Gastrocnemius medialis (tissue), 4 donors: ENCODE measurements at regions of chr6 and their contacts with region 1.

Region 1: DNA sequence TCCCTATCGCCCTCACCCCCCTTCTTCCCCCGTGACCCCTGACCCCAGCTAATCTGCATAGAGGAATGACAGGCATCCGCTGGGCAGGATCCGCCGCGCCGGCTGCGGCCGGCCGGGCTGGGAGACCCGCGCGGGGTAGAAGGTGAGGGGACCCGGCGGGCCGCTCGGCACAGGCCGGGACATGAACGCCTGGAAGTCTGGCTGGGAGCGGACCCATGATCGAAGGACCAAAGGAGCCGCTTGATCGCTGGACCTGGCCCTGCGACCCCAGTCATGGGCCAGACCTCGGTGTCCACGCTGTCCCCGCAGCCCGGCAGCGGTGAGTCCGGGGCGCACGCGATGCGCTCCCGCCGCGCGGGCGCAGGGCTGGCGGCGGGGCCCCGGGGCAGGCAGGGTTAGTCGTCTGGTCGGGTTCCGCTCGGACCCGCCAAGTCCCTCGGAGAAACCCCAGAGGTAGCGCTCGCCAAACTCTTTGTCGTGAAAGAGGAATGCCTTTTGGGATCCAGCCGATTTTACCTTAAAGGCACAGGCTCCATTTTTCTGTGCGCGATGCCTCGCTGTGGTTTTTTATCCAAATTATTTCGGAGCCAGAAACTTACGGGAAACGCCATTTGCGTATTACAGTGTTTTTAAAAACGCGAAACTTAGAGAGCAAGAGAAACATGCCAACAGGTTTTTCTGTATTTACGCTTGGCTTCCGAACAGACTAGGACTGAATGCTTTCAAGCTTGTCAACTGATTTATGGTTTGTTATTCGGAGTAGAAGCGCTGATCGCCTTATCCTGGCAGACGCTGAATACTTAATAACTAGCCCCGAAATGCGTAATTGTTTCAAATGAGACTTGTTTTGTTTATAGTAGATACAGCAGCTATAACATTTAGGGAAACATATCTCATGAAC is at the start of gene PHACTR2:
- DNase-seq: peak; percentile 50 to 58
- ATAC-seq: peak; percentile 78 to 84
- H3K4me3 ChIP-seq: peak within 1 kb of the TSS; percentile 72 to 87 (median 78)
- H3K27ac ChIP-seq: peak within 1 kb of the TSS; percentile 77 to 88 (median 84)
- H3K4me1 ChIP-seq: peaks cover 14 to 30% of the 10 kb centered on the region in 2 donors
- H3K27me3 ChIP-seq: no peaks in the 10 kb centered on the region
- CTCF ChIP-seq: no peak
- POLR2A ChIP-seq: peak; percentile 59 to 65
- total RNA-seq, gene PHACTR2: 25.4 to 31.8 (median 26.1) TPM

Region 2: GRCh38 chr6:143743301-143744166 is 65.4 kb after region 1 on chr6:
- in situ Hi-C with region 1: no loop called
- intact Hi-C with region 1: loop called (anchors 5 kb)
- DNase-seq: no peak
- ATAC-seq: peak; percentile 15 to 45
- H3K4me3 ChIP-seq: no peak overlapping the region
- H3K27ac ChIP-seq: peak overlapping the region; percentile 51 to 63 (median 57)
- H3K4me1 ChIP-seq: peaks cover 40 to 51% of the 10 kb centered on the region in 2 donors
- H3K27me3 ChIP-seq: no peaks in the 10 kb centered on the region
- CTCF ChIP-seq: no peak
- POLR2A ChIP-seq: no peak